Activated CD4-positive, alpha-beta T cell treated with anti-CD3 and anti-CD28 coated beads for 36 hours (primary cell): ENCODE measurements at regions of chr1 and their contacts with region 1.

Region 1: GRCh38 chr1:59046730-59047157 is 250.2 kb upstream of the FGGY start:
- DNase-seq: peak; percentile 60
- ATAC-seq: peak; percentile 90
- H3K4me3 Mint-ChIP-seq: peak overlapping the region; percentile 16
- H3K27ac Mint-ChIP-seq: peak overlapping the region; percentile 77
- H3K4me1 Mint-ChIP-seq: peaks cover 27% of the 10 kb centered on the region
- H3K27me3 Mint-ChIP-seq: no peaks in the 10 kb centered on the region

Region 2: DNA sequence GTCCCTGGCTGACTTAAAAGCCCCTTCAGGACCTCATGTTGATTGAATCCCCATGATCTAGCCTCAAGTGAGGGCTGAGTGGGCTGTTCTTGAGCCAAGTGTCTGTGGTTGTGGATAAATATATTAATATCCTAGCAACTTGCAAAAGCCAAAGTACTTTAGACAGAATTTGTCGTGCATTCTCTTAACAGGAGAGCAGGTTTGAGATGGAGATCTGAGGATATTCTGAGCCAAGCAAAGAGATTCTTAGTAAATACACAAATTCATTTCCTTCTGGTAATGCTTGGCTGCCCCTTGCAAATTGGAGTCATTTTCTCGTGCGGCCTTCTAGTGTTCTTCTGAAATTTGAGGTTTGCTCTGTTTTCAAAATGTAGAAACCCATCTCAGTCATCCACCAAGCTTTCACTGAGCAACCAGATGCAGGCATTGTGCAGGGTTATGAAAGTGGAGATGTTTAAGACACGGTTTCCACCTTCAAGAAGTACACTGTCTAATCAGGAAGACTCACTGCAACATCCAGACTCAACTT is 20.8 kb before region 1 on chr1:
- CTCF ChIA-PET with region 1: interaction called, 3 read pairs
- POLR2A ChIA-PET with region 1: no interaction called
- intact Hi-C with region 1: loop called in 1 of 2 experiments (anchors 1 kb)
- DNase-seq: peak; percentile 16
- ATAC-seq: peak; percentile 69
- H3K4me3 Mint-ChIP-seq: no peak overlapping the region
- H3K27ac Mint-ChIP-seq: peak overlapping the region; percentile 80
- H3K4me1 Mint-ChIP-seq: peaks cover 24% of the 10 kb centered on the region
- H3K27me3 Mint-ChIP-seq: no peaks in the 10 kb centered on the region

Region 3: GRCh38 chr1:59061876-59062275 is 15.1 kb after region 1 on chr1:
- CTCF ChIA-PET with region 1: interaction called, 11 read pairs
- POLR2A ChIA-PET with region 1: no interaction called
- intact Hi-C with region 1: no loop called
- DNase-seq: no peak
- ATAC-seq: no peak
- H3K4me3 Mint-ChIP-seq: no peak overlapping the region
- H3K27ac Mint-ChIP-seq: no peak overlapping the region
- H3K4me1 Mint-ChIP-seq: peaks cover 29% of the 10 kb centered on the region
- H3K27me3 Mint-ChIP-seq: no peaks in the 10 kb centered on the region